Activated naive CD4-positive, alpha-beta T cell treated with anti-CD3 and anti-CD28 coated beads for 36 hours (primary cell): ENCODE measurements at regions of chr14 and their contacts with region 1.

Region 1: GRCh38 chr14:24431569-24432258 is 2.0 kb downstream of the KHNYN start:
- DNase-seq: peak; percentile 95
- H3K4me3 Mint-ChIP-seq: peak overlapping the region; percentile 95
- H3K27ac Mint-ChIP-seq: peak overlapping the region; percentile 97
- H3K4me1 Mint-ChIP-seq: peaks cover 39% of the 10 kb centered on the region
- H3K27me3 Mint-ChIP-seq: no peaks in the 10 kb centered on the region

Region 2: GRCh38 chr14:24141097-24141880 is 290.4 kb before region 1 on chr14 and contains the start of gene EMC9:
- CTCF ChIA-PET with region 1: interaction called, 3 read pairs
- intact Hi-C with region 1: loop called (anchors 1 kb)
- DNase-seq: peak; percentile 100
- H3K4me3 Mint-ChIP-seq: peak within 1 kb of the TSS; percentile 99
- H3K27ac Mint-ChIP-seq: peak within 1 kb of the TSS; percentile 93
- H3K4me1 Mint-ChIP-seq: peaks cover 73% of the 10 kb centered on the region
- H3K27me3 Mint-ChIP-seq: no peaks in the 10 kb centered on the region
- total RNA-seq, gene EMC9: 38.4 to 38.9 TPM

Region 3: DNA sequence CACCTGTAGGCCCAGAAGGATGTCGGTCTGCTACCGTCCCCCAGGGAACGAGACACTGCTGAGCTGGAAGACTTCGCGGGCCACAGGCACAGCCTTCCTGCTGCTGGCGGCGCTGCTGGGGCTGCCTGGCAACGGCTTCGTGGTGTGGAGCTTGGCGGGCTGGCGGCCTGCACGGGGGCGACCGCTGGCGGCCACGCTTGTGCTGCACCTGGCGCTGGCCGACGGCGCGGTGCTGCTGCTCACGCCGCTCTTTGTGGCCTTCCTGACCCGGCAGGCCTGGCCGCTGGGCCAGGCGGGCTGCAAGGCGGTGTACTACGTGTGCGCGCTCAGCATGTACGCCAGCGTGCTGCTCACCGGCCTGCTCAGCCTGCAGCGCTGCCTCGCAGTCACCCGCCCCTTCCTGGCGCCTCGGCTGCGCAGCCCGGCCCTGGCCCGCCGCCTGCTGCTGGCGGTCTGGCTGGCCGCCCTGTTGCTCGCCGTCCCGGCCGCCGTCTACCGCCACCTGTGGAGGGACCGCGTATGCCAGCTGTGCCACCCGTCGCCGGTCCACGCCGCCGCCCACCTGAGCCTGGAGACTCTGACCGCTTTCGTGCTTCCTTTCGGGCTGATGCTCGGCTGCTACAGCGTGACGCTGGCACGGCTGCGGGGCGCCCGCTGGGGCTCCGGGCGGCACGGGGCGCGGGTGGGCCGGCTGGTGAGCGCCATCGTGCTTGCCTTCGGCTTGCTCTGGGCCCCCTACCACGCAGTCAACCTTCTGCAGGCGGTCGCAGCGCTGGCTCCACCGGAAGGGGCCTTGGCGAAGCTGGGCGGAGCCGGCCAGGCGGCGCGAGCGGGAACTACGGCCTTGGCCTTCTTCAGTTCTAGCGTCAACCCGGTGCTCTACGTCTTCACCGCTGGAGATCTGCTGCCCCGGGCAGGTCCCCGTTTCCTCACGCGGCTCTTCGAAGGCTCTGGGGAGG is 120.8 kb before region 1 on chr14 and contains the start of gene LTB4R:
- CTCF ChIA-PET with region 1: interaction called, 28 read pairs
- intact Hi-C with region 1: loop called (anchors 1 kb)
- DNase-seq: peak; percentile 71
- H3K4me3 Mint-ChIP-seq: peak within 1 kb of the TSS; percentile 71
- H3K27ac Mint-ChIP-seq: peak within 1 kb of the TSS; percentile 68
- H3K4me1 Mint-ChIP-seq: peaks cover 64% of the 10 kb centered on the region
- H3K27me3 Mint-ChIP-seq: no peaks in the 10 kb centered on the region
- total RNA-seq, gene LTB4R: 10.6 to 11.4 TPM

Region 4: DNA sequence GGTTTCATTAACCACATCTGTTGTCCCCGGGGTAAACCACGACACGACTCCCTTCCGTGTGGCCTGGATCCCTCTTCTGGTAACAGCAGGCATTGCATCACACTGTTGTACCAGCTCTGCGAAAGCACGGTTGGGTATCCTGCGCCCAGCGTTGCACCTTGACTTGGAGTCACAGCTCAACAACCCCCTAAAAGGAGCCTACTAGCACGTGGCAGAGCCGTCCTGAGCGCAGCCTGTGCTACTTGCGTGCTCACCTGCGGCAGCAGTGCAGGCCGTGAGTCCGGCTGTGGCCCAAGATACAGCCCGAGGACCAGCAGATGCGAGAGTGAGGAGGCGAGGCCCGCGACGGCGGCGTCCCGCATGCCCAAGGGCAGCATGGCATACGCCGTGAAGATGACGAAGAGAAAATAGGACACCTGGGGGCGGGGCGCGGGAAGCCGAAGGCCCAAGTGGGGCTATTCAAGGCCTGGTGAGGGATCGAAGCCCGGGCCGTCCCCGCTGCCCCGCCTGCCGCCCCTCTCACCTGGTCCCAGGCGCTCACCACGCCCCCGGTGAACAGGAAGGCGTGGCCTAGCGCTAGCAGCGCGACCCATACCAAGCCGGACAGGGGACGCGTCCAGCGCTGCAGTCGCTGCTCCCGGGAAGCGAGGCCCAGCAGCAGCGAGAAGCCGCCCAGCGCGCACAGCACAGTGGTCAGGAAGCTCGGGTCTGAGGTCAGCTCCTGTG is 99.3 kb before region 1 on chr14:
- CTCF ChIA-PET with region 1: interaction called, 617 read pairs
- intact Hi-C with region 1: loop called (anchors 1 kb)
- DNase-seq: peak; percentile 91
- H3K4me3 Mint-ChIP-seq: peak overlapping the region; percentile 71
- H3K27ac Mint-ChIP-seq: no peak overlapping the region
- H3K4me1 Mint-ChIP-seq: peaks cover 28% of the 10 kb centered on the region
- H3K27me3 Mint-ChIP-seq: peaks cover 24% of the 10 kb centered on the region

Region 5: GRCh38 chr14:24366721-24367513 is 64.8 kb before region 1 on chr14:
- CTCF ChIA-PET with region 1: interaction called, 52 read pairs
- intact Hi-C with region 1: loop called (anchors 1 kb)
- DNase-seq: peak; percentile 31
- H3K4me3 Mint-ChIP-seq: peak overlapping the region; percentile 71
- H3K27ac Mint-ChIP-seq: no peak overlapping the region
- H3K4me1 Mint-ChIP-seq: peaks cover 29% of the 10 kb centered on the region
- H3K27me3 Mint-ChIP-seq: peaks cover 41% of the 10 kb centered on the region

Region 6: GRCh38 chr14:24398653-24399446 is 32.9 kb before region 1 on chr14 and contains the start of gene NYNRIN:
- CTCF ChIA-PET with region 1: interaction called, 8 read pairs
- intact Hi-C with region 1: loop called (anchors 2 kb)
- DNase-seq: peak; percentile 27
- H3K4me3 Mint-ChIP-seq: peak within 1 kb of the TSS; percentile 37
- H3K27ac Mint-ChIP-seq: no peak within 1 kb of the TSS
- H3K4me1 Mint-ChIP-seq: peaks cover 6% of the 10 kb centered on the region
- H3K27me3 Mint-ChIP-seq: peaks cover 2% of the 10 kb centered on the region
- total RNA-seq, gene NYNRIN: 0.02 TPM in 1 of 2 experiments, not detected in the other

Region 7: DNA sequence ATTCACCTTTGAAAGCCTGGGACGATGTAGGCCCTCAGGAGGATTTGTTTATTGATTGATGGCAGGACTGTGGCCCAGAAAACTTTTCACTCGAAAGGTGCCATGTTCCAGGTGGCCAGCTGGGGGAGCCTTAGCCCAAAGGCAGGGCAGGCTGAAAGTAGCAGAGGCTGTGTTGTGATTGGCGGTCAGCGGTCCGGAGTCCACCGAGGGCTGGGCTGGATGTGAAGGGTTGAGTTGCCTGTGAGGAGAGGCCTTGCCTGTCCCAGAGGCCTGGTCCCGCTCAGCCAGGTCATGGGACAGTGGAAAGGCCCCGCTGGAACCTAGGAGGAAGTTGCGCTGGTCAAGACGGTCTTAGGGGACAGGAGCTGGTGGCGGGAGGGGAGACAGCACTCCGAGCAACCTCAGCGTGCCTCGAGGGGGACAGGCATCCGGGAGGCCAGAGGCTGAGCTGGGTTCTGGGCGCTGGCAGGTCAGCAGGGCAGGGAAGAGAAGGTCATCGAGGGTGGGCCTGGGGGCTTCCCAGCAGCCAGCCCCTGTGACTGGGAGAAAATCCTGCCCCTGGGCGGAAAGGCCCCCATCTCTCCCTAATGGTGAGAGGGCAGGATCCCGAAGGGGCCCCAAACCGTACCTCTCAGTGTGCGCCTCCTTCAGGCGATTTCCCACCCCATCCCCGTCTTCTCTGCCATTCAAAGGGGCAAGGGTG is 50.1 kb after region 1 on chr14:
- CTCF ChIA-PET with region 1: interaction called, 12 read pairs
- intact Hi-C with region 1: no loop called
- DNase-seq: peak; percentile 80
- H3K4me3 Mint-ChIP-seq: peak overlapping the region; percentile 68
- H3K27ac Mint-ChIP-seq: peak overlapping the region; percentile 22
- H3K4me1 Mint-ChIP-seq: peaks cover 23% of the 10 kb centered on the region
- H3K27me3 Mint-ChIP-seq: no peaks in the 10 kb centered on the region

Region 8: DNA sequence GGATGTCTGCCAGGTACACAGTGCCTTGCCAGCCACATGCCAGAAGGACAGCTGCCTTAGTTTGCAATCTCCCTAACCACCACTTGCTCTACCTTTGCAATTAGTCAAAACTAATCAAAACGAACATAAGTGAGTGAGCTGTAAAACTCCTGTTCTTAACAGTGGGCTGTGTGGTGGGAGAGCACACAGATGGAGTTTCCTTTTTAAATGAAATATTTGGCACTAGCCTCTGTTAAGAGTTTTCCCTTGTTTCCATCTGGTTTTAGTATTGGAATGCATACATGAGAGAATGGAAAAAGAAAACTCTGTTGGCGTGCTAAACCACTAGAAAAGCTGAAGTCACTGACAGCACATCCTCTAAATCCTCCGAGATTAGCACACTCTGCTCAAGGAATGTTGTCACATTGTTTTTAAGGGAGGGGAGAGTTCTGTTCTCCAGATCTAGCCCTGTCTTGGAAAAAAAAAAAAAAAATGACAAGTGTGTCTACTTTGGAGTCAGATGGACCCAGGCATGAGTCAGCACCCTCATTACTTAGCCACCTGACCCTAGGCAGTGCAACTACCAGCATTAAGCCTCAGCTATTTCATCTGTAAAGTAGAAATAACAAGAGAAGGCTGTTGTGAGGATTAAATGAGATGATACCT is 534.3 kb after region 1 on chr14:
- CTCF ChIA-PET with region 1: no interaction called
- intact Hi-C with region 1: no loop called
- DNase-seq: no peak
- H3K4me3 Mint-ChIP-seq: no peak overlapping the region
- H3K27ac Mint-ChIP-seq: no peak overlapping the region
- H3K4me1 Mint-ChIP-seq: no peaks in the 10 kb centered on the region
- H3K27me3 Mint-ChIP-seq: peaks cover 3% of the 10 kb centered on the region